CD8-positive, alpha-beta T cell (primary cell): ENCODE measurements at regions of chr15 and their contacts with region 1.

Region 1: DNA sequence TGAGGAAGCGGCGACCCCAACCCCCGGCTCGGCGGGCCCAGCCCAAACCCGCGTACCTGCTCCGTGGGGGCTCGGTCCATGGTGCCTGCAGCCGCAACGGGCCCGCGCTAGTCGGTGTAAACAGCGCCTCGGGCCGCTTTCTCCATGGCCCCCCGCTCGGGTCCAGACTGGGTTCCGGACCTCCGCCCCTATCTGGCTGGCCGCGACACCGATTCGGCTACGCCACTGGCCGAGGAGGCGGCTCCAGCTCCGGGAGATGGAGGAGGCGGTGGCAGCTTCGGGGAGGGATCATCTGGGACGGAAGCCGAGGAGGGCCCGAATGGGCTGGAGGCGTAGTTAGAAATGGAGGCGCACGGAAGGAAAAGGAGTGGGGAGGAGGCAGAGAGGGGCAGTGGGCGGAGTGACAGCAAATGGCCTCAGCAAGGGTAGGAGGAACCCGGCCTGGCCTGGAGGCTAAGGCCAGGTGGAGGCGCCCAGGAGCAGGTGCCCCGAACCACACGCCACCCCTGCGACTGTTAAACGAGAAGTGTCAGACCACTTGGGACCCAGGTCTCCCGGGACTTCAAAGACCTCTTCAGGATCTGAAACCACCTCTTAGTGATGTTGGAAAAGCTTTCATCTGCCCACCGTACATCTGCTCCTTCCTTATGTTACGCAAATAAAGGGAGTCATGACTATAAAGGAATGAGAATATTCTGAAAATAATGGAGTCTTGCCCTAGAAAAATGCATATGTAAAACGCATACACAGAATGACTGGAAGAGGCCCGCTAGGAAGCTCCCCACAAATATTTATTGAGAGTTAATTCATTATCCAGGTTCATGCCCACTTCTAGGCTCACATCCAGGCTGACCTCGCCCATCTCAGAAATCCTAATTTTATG is at the start of gene SECISBP2L:
- DNase-seq: peak; percentile 76 to 95 (median 89)
- ATAC-seq: peak; percentile 94
- H3K4me3 ChIP-seq: peak within 1 kb of the TSS; percentile 89 to 95
- H3K4me3 Mint-ChIP-seq: peak within 1 kb of the TSS; percentile 97
- H3K27ac ChIP-seq: peak within 1 kb of the TSS; percentile 64 to 66
- H3K27ac Mint-ChIP-seq: peak within 1 kb of the TSS; percentile 91
- H3K4me1 ChIP-seq: peaks cover 30% of the 10 kb centered on the region
- H3K4me1 Mint-ChIP-seq: peaks cover 32% of the 10 kb centered on the region
- H3K27me3 ChIP-seq: no peaks in the 10 kb centered on the region
- H3K27me3 Mint-ChIP-seq: no peaks in the 10 kb centered on the region
- CTCF ChIP-seq: no peak
- total RNA-seq, gene SECISBP2L: 54.8 to 61.2 TPM

Region 2: DNA sequence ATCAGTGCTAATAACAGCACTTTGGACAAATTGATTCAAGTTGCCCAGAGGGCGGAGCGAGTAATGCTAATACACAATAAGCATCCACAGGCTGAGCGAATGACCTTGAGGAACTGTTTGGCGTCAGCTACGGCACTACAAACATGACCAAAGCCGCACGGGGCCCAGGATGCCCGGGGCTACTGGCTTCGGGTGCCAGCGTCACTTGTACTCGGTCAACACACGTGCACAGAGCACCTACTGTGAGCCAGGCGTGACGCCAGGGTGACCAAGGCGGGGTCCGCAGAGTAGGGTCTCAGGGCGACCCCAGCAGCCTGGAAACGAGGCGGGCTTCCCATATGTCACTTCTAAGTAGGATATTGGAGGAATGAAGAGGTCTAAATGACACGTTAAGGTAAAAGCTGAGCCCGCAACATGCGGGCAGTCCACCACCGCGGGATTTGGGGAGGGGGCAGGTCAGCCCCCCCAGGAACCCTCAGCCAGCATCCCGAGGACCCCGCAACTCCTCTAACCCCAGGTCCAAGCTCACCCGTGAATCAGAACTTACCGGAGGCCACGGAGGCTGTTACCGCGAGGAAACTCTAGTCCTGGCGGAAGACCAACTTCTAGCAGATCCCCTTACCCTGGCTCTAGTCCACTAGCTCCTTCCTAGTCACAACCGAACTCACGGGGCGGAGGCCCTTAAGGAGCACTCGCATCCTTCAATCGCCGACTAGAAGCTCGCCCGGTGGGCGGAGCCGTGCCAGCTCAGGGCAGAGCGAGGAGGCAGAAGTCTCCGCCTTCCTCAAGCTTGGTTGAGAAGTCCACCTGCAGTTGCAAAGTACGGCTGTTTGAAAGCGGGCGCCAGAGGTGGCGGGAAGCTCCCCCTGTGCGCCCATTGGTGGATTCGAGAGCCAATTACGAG is 235.8 kb before region 1 on chr15 and contains the start of gene CEP152:
- CTCF ChIA-PET with region 1: no interaction called
- POLR2A ChIA-PET with region 1: no interaction called
- intact Hi-C with region 1: loop called (anchors 1 to 2 kb)
- DNase-seq: peak; percentile 96 to 100 (median 98)
- ATAC-seq: peak; percentile 94
- H3K4me3 ChIP-seq: peak within 1 kb of the TSS; percentile 83 to 95
- H3K4me3 Mint-ChIP-seq: peak within 1 kb of the TSS; percentile 90
- H3K27ac ChIP-seq: peak within 1 kb of the TSS; percentile 64 to 73
- H3K27ac Mint-ChIP-seq: peak within 1 kb of the TSS; percentile 71
- H3K4me1 ChIP-seq: peaks cover 13% of the 10 kb centered on the region
- H3K4me1 Mint-ChIP-seq: peaks cover 33% of the 10 kb centered on the region
- H3K27me3 ChIP-seq: no peaks in the 10 kb centered on the region
- H3K27me3 Mint-ChIP-seq: peaks cover 6% of the 10 kb centered on the region
- CTCF ChIP-seq: no peak
- total RNA-seq, gene CEP152: 3.9 to 5.1 TPM

Region 3: DNA sequence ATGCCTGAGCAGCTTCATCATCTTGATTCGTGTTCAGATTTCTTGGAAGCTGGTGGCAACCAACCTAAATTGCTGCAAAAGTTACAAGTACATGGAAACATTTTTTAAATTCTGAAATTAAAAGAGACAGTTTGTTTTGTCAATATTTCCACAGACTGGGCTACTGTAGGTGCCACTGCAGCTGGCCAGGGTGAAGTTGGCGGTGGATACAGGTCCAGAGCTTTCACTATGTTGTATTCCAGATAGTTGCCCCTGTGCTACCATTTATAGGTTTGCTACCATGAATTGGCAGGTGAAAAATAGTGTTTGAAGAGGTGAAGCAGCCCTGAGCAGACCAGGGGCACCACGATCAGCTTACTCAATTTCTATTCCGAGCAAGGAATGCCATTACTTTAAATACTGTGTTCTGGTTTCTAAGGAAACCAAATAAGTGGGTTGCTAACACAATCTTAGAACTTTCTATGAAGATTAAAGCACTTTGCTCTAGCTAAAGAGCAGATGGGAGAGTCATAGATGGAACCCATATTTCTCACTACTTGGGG is 61.6 kb before region 1 on chr15:
- CTCF ChIA-PET with region 1: no interaction called
- POLR2A ChIA-PET with region 1: no interaction called
- intact Hi-C with region 1: no loop called
- DNase-seq: no peak
- ATAC-seq: no peak
- H3K4me3 ChIP-seq: no peak overlapping the region
- H3K4me3 Mint-ChIP-seq: no peak overlapping the region
- H3K27ac ChIP-seq: no peak overlapping the region
- H3K27ac Mint-ChIP-seq: no peak overlapping the region
- H3K4me1 ChIP-seq: no peaks in the 10 kb centered on the region
- H3K4me1 Mint-ChIP-seq: no peaks in the 10 kb centered on the region
- H3K27me3 ChIP-seq: no peaks in the 10 kb centered on the region
- H3K27me3 Mint-ChIP-seq: peaks cover 10% of the 10 kb centered on the region
- CTCF ChIP-seq: no peak

Region 4: GRCh38 chr15:49060710-49061505 is 14.4 kb after region 1 on chr15:
- CTCF ChIA-PET with region 1: interaction called, 3 read pairs
- POLR2A ChIA-PET with region 1: interaction called, 10 read pairs
- intact Hi-C with region 1: no loop called
- DNase-seq: no peak
- ATAC-seq: no peak
- H3K4me3 ChIP-seq: no peak overlapping the region
- H3K4me3 Mint-ChIP-seq: no peak overlapping the region
- H3K27ac ChIP-seq: no peak overlapping the region
- H3K27ac Mint-ChIP-seq: peak overlapping the region; percentile 12
- H3K4me1 ChIP-seq: no peaks in the 10 kb centered on the region
- H3K4me1 Mint-ChIP-seq: peaks cover 9% of the 10 kb centered on the region
- H3K27me3 ChIP-seq: no peaks in the 10 kb centered on the region
- H3K27me3 Mint-ChIP-seq: no peaks in the 10 kb centered on the region
- CTCF ChIP-seq: no peak

Region 5: DNA sequence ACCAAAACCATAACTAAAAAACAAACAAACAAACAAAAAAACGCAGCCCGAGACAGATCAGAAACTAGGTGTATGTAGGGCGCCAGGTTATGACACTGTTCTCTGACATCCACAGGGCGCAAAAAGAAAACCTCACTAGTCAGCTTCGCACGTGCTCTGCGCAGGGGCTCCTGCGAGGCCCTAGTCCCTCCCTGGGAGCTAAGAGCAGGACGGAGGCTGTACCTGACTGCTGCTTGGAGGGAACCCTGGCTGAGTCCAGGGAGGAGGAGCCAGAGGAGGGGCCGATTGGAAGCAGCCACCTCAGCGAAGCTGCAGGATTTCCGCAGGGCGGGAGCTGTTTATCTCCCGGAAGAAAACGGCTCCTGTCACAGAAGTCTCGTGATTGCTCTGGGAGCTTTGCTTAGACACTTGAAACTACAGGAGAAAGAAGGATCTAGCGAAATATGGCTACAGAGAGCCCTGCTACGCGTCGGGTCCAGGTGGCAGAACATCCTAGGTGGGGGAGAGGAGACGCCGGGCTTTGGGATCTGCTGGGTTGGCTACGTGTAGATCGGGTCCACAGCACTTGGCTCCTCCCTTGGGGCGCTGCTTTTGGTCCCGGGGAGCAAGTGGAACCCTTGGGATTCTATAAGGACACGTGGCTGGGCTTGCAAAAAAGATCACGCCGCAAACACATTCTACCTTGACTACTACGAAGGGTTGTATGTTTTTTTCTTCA is 123.6 kb after region 1 on chr15 and contains the start of gene GALK2:
- CTCF ChIA-PET with region 1: no interaction called
- POLR2A ChIA-PET with region 1: no interaction called
- intact Hi-C with region 1: loop called (anchors 5 kb)
- DNase-seq: peak; percentile 58 to 91 (median 81)
- ATAC-seq: peak; percentile 99
- H3K4me3 ChIP-seq: peak within 1 kb of the TSS; percentile 67 to 75
- H3K4me3 Mint-ChIP-seq: peak within 1 kb of the TSS; percentile 96
- H3K27ac ChIP-seq: peak within 1 kb of the TSS; percentile 74 to 88
- H3K27ac Mint-ChIP-seq: peak within 1 kb of the TSS; percentile 98
- H3K4me1 ChIP-seq: peaks cover 11% of the 10 kb centered on the region
- H3K4me1 Mint-ChIP-seq: peaks cover 43% of the 10 kb centered on the region
- H3K27me3 ChIP-seq: no peaks in the 10 kb centered on the region
- H3K27me3 Mint-ChIP-seq: no peaks in the 10 kb centered on the region
- CTCF ChIP-seq: no peak
- total RNA-seq, gene GALK2: 7.7 to 10.7 TPM

Region 6: GRCh38 chr15:50344006-50344464 is 1297.6 kb after region 1 on chr15:
- CTCF ChIA-PET with region 1: no interaction called
- POLR2A ChIA-PET with region 1: no interaction called
- intact Hi-C with region 1: loop called in 1 of 2 experiments (anchors 5 kb)
- DNase-seq: no peak
- ATAC-seq: no peak
- H3K4me3 ChIP-seq: no peak overlapping the region
- H3K4me3 Mint-ChIP-seq: no peak overlapping the region
- H3K27ac ChIP-seq: no peak overlapping the region
- H3K27ac Mint-ChIP-seq: no peak overlapping the region
- H3K4me1 ChIP-seq: peaks cover 1% of the 10 kb centered on the region
- H3K4me1 Mint-ChIP-seq: peaks cover 35% of the 10 kb centered on the region
- H3K27me3 ChIP-seq: no peaks in the 10 kb centered on the region
- H3K27me3 Mint-ChIP-seq: no peaks in the 10 kb centered on the region
- CTCF ChIP-seq: no peak

Region 7: DNA sequence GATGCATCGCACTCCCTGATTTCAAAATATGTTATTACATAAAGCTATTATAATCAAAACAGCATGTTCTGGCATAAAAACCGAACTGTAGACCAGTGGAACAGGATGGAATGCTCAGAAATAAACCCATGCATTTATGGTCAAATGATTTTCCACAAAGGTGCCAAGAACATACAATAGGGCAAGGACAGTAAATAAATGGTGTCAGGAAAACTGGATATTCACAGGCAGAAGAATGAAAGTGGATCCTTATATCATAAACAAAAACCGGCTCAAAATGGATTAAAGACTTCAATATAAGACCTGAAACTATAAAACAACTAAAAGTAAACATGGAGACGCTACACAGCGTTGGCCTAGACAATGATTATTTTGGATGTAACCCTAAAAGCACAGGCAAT is 1477.4 kb after region 1 on chr15:
- CTCF ChIA-PET with region 1: no interaction called
- POLR2A ChIA-PET with region 1: no interaction called
- intact Hi-C with region 1: no loop called
- DNase-seq: no peak
- ATAC-seq: no peak
- H3K4me3 ChIP-seq: no peak overlapping the region
- H3K4me3 Mint-ChIP-seq: no peak overlapping the region
- H3K27ac ChIP-seq: no peak overlapping the region
- H3K27ac Mint-ChIP-seq: no peak overlapping the region
- H3K4me1 ChIP-seq: no peaks in the 10 kb centered on the region
- H3K4me1 Mint-ChIP-seq: no peaks in the 10 kb centered on the region
- H3K27me3 ChIP-seq: no peaks in the 10 kb centered on the region
- H3K27me3 Mint-ChIP-seq: no peaks in the 10 kb centered on the region
- CTCF ChIP-seq: no peak

Region 8: DNA sequence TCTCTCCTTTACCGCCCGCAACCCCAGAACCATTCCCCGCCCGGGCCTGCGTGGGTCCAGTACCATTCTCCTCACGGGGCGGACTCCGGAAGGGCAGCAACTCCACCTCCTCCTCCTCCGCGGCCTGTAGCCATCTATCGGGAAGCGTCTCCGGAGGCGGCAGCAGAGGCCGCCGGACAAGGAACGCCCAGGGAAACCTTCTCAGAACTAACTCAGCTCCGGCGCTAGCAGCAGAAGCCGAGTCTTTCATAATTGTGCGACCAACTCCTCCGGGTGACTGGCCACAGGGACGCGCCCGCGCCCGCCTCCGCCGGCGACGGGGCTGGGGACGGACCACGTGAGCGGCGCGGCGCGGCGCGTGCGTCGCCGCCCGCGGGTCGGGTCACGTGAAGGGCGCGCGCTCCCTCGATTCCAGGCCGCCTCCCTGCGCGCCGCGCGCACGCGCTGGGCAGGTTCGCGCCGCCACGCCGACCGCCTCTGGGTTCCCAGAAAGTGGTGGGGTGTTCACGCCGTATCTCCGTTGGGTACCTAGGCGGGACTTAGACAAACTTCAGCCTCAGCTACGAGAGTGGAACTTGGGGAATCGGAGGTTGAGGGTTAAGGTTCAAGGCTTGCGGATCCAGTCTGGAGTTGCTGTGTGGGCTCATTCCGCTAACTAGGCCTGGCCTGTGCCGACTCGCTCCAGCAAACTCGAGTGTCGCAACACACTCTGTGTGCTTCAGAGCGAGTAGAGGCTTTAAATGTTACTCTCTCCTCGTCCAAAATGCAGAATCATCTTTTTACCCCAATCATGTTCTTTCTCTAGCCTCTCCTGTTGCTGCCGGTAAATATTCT is 1640.2 kb after region 1 on chr15 and contains the start of gene TRPM7:
- CTCF ChIA-PET with region 1: no interaction called
- POLR2A ChIA-PET with region 1: no interaction called
- intact Hi-C with region 1: loop called (anchors 2 to 5 kb)
- DNase-seq: peak; percentile 74 to 96 (median 87)
- ATAC-seq: peak; percentile 74
- H3K4me3 ChIP-seq: peak within 1 kb of the TSS; percentile 78 to 88
- H3K4me3 Mint-ChIP-seq: peak within 1 kb of the TSS; percentile 99
- H3K27ac ChIP-seq: peak within 1 kb of the TSS; percentile 90 to 93
- H3K27ac Mint-ChIP-seq: peak within 1 kb of the TSS; percentile 99
- H3K4me1 ChIP-seq: peaks cover 21% of the 10 kb centered on the region
- H3K4me1 Mint-ChIP-seq: peaks cover 50% of the 10 kb centered on the region
- H3K27me3 ChIP-seq: no peaks in the 10 kb centered on the region
- H3K27me3 Mint-ChIP-seq: no peaks in the 10 kb centered on the region
- CTCF ChIP-seq: no peak
- total RNA-seq, gene TRPM7: 29.5 to 30.3 TPM